Activated T-helper 2 cell treated with anti-CD3 and anti-CD28 coated beads, Interferon-gamma antibody, Interleukin-2, Interleukin-4, amounts not matched to agents 10 μg/mL and 5 μg/mL and 100 μg/mL, durations not matched to agents 14 hours and 24 hours and 36 hours (primary cell): ENCODE measurements at regions of chrX and their contacts with region 1.

Region 1: GRCh38 chrX:48917139-48918001 is 1.5 kb downstream of the PIM2 start:
- DNase-seq: peak; percentile 87
- H3K4me3 Mint-ChIP-seq: peak overlapping the region; percentile 91
- H3K27ac Mint-ChIP-seq: peak overlapping the region; percentile 97
- H3K4me1 Mint-ChIP-seq: peaks cover 35% of the 10 kb centered on the region
- H3K27me3 Mint-ChIP-seq: no peaks in the 10 kb centered on the region

Region 2: DNA sequence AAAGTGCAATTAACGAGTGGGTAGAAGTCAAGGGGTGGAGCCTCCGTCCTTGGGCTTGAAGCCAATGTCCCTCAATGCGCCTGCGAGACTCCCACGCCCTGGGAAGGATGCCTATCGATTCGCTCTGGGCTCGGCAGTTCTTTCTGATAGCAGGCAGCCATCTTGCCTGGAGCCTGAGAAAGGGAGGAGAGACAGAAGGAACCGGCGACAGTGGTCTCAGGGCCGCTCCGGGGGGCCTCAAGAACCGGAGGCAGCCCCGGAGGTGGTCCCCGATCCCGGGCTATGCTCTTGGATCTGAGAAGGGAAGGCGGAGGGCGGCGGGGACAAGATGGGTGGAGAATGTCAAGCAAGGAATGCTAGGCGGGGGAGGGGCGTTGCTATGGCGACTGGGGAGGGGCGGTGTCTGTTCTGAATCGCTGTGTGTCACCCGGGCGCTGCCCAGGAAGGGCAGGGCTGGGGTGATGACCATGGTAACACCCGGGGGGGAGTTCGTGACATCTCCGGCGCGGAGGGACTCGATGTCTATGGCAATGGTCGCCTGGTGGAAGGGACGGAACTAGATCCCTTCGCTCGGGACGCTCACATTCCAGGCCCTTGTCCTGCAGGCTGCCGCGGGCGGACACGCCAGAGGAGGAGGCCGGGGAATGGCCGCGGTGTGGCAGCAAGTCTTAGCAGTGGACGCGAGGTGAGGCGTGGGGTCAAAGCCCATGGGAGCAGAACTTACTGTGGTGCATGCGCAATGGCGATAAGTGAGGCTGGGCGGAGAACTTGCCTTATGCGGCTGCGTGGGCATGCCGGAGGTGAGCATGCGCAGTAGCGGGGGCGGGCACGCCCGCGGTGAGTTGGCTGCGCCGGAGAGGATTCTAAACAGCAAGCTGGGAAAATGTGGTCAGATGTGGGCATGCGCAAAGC is 319.8 kb before region 1 on chrX and contains the start of gene WDR13:
- intact Hi-C with region 1: no loop called
- DNase-seq: peak; percentile 86
- H3K4me3 Mint-ChIP-seq: peak within 1 kb of the TSS; percentile 94
- H3K27ac Mint-ChIP-seq: peak within 1 kb of the TSS; percentile 99
- H3K4me1 Mint-ChIP-seq: peaks cover 6% of the 10 kb centered on the region
- H3K27me3 Mint-ChIP-seq: no peaks in the 10 kb centered on the region
- total RNA-seq, gene WDR13: 43.4 and 44.7 TPM in 2 replicates

Region 3: GRCh38 chrX:48648336-48648751 is 269.0 kb before region 1 on chrX:
- intact Hi-C with region 1: loop called (anchors 10 kb)
- DNase-seq: peak; percentile 10
- H3K4me3 Mint-ChIP-seq: no peak overlapping the region
- H3K27ac Mint-ChIP-seq: no peak overlapping the region
- H3K4me1 Mint-ChIP-seq: no peaks in the 10 kb centered on the region
- H3K27me3 Mint-ChIP-seq: no peaks in the 10 kb centered on the region

Region 4: DNA sequence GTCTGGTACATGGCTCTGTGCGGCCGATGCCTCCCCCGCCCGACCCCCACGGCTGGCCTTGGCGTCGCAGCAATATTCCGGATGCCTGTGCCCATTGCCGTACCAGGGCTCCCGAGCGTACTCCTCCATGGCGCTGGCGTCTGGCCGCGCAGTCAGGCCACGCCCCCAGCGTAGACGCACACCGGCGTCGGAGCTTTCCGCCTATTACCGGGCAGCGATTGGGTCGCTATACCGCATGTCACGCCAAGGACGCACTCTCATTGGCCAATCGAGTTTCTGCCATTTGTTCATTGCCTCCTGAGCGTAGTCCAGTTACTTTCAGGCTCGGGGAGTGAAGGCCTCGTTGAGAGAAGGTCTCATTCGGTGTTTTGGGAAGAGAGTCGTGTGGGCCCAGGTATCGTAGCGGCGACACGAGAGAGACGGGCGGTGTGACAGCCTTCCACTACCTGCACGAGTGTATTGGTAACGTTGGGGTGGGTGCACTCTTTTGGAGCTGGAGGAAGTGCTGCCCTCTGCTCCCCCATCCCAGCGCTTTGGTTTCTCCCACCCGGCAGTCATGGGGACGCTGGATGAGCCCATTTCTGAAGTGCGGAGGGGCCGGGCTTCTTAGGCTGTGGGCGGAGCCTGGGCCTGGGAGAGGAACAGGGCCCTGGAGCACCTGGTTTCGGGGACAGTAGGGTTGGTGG is 19.6 kb before region 1 on chrX and contains the starts of genes PQBP1 and TIMM17B:
- intact Hi-C with region 1: loop called (anchors 1 kb)
- DNase-seq: peak; percentile 85
- H3K4me3 Mint-ChIP-seq: peak within 1 kb of the TSS; percentile 97
- H3K27ac Mint-ChIP-seq: peak within 1 kb of the TSS; percentile 100
- H3K4me1 Mint-ChIP-seq: peaks cover 14% of the 10 kb centered on the region
- H3K27me3 Mint-ChIP-seq: no peaks in the 10 kb centered on the region
- total RNA-seq, gene PQBP1: 97.3 and 103 TPM in 2 replicates
- total RNA-seq, gene TIMM17B: 66.2 and 71.6 TPM in 2 replicates

Region 5: DNA sequence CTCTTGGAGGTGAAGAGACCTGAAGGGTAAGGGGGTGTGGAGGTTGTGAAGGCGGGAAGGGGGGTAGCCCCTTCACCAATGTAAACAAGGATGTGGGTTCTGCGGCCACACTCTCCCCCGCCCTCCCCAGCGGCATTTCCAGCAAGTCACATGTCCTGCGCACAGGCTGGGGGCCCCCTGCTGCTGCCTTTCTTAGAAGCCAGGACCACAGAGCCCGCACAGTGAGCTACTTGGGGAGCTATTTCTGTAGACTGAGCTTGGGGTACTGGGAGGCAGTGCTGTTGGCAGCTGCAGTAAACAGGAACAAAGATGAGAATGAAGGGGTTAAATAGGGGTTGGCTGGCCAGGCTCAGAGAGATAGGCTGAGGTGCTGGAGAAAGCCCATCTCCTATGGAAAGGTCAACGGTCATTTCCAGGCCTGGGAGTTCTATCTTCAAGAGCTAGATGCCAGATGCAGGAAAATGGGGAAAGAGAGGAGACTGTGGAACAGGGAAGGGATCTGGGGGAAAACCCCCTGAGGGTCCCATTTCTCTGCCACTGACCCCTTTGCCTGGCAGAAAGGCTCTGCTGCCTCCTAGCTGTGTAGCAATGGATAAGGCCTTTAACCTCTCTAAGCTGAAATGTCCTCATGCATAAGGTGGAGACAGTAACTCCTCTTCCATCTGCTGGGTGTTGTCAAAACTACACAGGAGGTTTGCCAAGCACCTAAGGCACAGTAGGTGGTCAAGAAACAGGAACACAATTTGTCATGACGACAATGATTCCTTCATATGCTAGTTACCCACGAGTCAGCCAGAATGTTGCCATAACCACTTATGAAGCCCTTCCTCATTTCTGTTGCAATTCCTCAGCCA is 19.9 kb after region 1 on chrX:
- intact Hi-C with region 1: loop called (anchors 1 kb)
- DNase-seq: peak; percentile 87
- H3K4me3 Mint-ChIP-seq: peak overlapping the region; percentile 71
- H3K27ac Mint-ChIP-seq: peak overlapping the region; percentile 99
- H3K4me1 Mint-ChIP-seq: peaks cover 71% of the 10 kb centered on the region
- H3K27me3 Mint-ChIP-seq: no peaks in the 10 kb centered on the region

Region 6: GRCh38 chrX:48957827-48958634 is 40.7 kb after region 1 on chrX:
- intact Hi-C with region 1: loop called (anchors 5 kb)
- DNase-seq: peak; percentile 91
- H3K4me3 Mint-ChIP-seq: peak overlapping the region; percentile 99
- H3K27ac Mint-ChIP-seq: peak overlapping the region; percentile 100
- H3K4me1 Mint-ChIP-seq: peaks cover 34% of the 10 kb centered on the region
- H3K27me3 Mint-ChIP-seq: no peaks in the 10 kb centered on the region